ENCODE measurements at regions of chr10 and their contacts with region 1.

Region 1: GRCh38 chr10:129899276-129900130 is 64.6 kb downstream of the EBF3 start:
- DNase-seq: peak in 1 of 5 donors; percentile 13
- ATAC-seq: no peak
- H3K4me3 ChIP-seq: no peak overlapping the region
- H3K27ac ChIP-seq: no peak overlapping the region
- H3K4me1 ChIP-seq: peaks cover 0 to 25% (median 7%) of the 10 kb centered on the region in 12 donors
- H3K27me3 ChIP-seq: no peaks in the 10 kb centered on the region
- CTCF ChIP-seq: no peak
- POLR2A ChIP-seq: no peak

Region 2: GRCh38 chr10:128125944-128126764 is 1773.3 kb before region 1 on chr10 and contains the start of gene MKI67:
- intact Hi-C with region 1: no loop called
- DNase-seq: peak; percentile 81 to 90 (median 86)
- ATAC-seq: peak; percentile 86 to 98 (median 96)
- H3K4me3 ChIP-seq: peak within 1 kb of the TSS; percentile 19 to 85 (median 58)
- H3K27ac ChIP-seq: no peak within 1 kb of the TSS
- H3K4me1 ChIP-seq: peaks cover 4 to 35% (median 16%) of the 10 kb centered on the region in 12 donors
- H3K27me3 ChIP-seq: peaks cover 6 to 46% (median 15%) of the 10 kb centered on the region in 9 donors
- CTCF ChIP-seq: no peak
- POLR2A ChIP-seq: no peak
- total RNA-seq, gene MKI67: 0.09 to 27.9 (median 0.89) TPM

Region 3: DNA sequence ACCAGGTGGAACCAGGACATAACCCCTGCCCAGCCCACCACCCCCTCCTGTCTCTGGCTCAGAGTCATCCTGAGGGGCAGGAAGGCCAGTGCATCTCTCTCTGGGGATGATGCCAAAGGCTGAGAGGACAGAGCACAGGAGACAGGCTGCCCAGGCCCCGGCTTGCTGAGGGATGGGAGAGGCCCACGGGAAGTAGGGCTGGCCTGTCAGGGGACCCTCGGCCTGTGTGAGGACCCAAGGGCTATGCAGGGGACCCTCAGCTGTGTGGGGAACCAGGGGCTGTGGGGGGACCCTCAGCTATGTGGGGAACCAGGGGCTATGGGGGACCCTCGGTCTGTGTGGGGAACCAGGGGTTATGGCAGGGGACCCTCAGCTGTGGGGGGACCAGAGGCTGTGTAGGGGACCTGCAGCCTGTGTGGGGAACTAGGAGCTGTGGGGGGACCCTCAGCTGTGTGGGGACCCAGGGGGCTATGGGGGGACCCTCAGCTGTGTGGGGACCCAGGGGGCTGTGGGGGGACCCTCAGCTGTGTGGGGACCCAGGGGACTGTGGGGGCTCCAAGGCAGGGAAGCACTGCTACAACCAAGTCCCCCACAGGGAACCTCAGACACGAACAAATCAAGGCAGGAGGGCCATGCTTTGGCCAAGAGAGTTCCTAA is 36.9 kb after region 1 on chr10:
- intact Hi-C with region 1: loop called in 1 of 10 experiments (anchors 5 kb)
- DNase-seq: peak in 2 of 5 donors; percentile 13 to 20
- ATAC-seq: no peak
- H3K4me3 ChIP-seq: no peak overlapping the region
- H3K27ac ChIP-seq: no peak overlapping the region
- H3K4me1 ChIP-seq: peaks cover 0 to 48% (median 37%) of the 10 kb centered on the region in 12 donors
- H3K27me3 ChIP-seq: no peaks in the 10 kb centered on the region
- CTCF ChIP-seq: no peak
- POLR2A ChIP-seq: no peak

Measured in heart left ventricle (tissue), 16 donors.